ENCODE measurements at regions of chr2 and their contacts with region 1.

Region 1: DNA sequence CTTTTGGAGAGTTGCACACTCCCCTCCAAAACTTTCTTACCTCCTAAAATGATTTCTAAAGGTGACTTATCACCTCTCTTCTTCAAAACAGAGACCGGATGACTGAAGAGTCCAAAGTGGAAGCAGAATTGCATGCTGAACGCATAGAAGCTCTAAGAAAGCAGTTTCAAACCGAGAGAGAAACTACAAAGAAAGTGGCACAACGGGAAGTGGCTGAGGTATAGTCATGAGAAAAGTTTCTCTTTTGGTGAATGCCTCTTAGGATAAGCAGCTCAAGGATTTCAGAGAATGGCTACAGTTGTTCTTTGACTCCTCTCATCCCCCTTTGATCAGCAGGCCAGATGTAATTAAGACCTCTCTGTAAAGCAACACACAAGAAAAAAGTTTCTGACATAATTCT is 73.6 kb downstream of the GTF3C3 start:
- DNase-seq: peak in 1 of 14 experiments; percentile 29
- ATAC-seq: no peak
- H3K4me3 ChIP-seq: no peak overlapping the region
- H3K4me3 Mint-ChIP-seq: no peak overlapping the region
- H3K27ac ChIP-seq: no peak overlapping the region
- H3K27ac Mint-ChIP-seq: no peak overlapping the region
- H3K4me1 ChIP-seq: no peaks in the 10 kb centered on the region
- H3K4me1 Mint-ChIP-seq: peaks cover 4% of the 10 kb centered on the region
- H3K27me3 ChIP-seq: no peaks in the 10 kb centered on the region
- H3K27me3 Mint-ChIP-seq: no peaks in the 10 kb centered on the region
- CTCF ChIP-seq: no peak

Region 2: GRCh38 chr2:194765723-194766122 is 1960.2 kb before region 1 on chr2:
- CTCF ChIA-PET with region 1: no interaction called
- POLR2A ChIA-PET with region 1: no interaction called
- intact Hi-C with region 1: loop called in 1 of 2 experiments (anchors 10 kb)
- DNase-seq: no peak
- ATAC-seq: no peak
- H3K4me3 ChIP-seq: no peak overlapping the region
- H3K4me3 Mint-ChIP-seq: no peak overlapping the region
- H3K27ac ChIP-seq: no peak overlapping the region
- H3K27ac Mint-ChIP-seq: no peak overlapping the region
- H3K4me1 ChIP-seq: no peaks in the 10 kb centered on the region
- H3K4me1 Mint-ChIP-seq: no peaks in the 10 kb centered on the region
- H3K27me3 ChIP-seq: no peaks in the 10 kb centered on the region
- H3K27me3 Mint-ChIP-seq: no peaks in the 10 kb centered on the region
- CTCF ChIP-seq: no peak

Region 3: GRCh38 chr2:196742685-196743084 is 16.8 kb after region 1 on chr2:
- CTCF ChIA-PET with region 1: no interaction called
- POLR2A ChIA-PET with region 1: no interaction called
- intact Hi-C with region 1: no loop called
- DNase-seq: no peak
- ATAC-seq: no peak
- H3K4me3 ChIP-seq: no peak overlapping the region
- H3K4me3 Mint-ChIP-seq: no peak overlapping the region
- H3K27ac ChIP-seq: no peak overlapping the region
- H3K27ac Mint-ChIP-seq: no peak overlapping the region
- H3K4me1 ChIP-seq: no peaks in the 10 kb centered on the region
- H3K4me1 Mint-ChIP-seq: no peaks in the 10 kb centered on the region
- H3K27me3 ChIP-seq: no peaks in the 10 kb centered on the region
- H3K27me3 Mint-ChIP-seq: no peaks in the 10 kb centered on the region
- CTCF ChIP-seq: no peak